ENCODE measurements at regions of chr17 and their contacts with region 1.

Region 1: DNA sequence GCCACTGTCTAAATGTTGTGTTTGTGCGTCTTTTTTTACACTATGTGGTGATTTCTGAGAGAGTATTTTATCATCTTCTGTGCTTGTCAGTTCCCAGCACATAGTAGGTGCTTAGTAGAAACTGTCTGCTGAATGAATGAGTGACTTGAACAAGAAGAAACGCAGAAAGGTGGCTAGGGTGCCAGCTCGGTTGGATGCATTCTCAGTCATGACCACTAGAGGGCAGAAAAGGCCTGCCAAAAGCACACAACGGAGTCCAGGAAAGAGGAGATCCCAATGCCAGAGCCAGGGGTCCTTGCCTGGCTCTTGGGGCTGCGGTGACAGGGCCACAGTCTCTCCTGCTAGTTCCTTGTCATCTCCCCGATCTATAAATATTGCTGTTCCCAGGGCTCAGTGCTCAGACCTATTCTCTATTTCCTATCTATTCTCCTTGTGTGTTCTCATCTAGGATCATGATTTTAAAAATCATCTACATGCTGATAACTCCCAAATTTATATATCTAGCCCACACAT is 57.3 kb upstream of the CCL1 start:
- ATAC-seq: peak; percentile 59 to 81 (median 74)
- H3K4me3 ChIP-seq: no peak overlapping the region
- H3K27ac ChIP-seq: no peak overlapping the region
- H3K4me1 ChIP-seq: peaks cover 0 to 8% of the 10 kb centered on the region in 2 donors

Region 2: GRCh38 chr17:34637548-34638525 is 217.5 kb after region 1 on chr17:
- in situ Hi-C with region 1: loop called in 3 of 9 experiments (anchors 25 kb)
- ATAC-seq: peak; percentile 88 to 100 (median 94)
- H3K4me3 ChIP-seq: no peak overlapping the region
- H3K27ac ChIP-seq: no peak overlapping the region
- H3K4me1 ChIP-seq: peaks cover 7 to 13% of the 10 kb centered on the region in 2 donors